Aorta (tissue), 5 donors: ENCODE measurements at regions of chr10 and their contacts with region 1.

Region 1: DNA sequence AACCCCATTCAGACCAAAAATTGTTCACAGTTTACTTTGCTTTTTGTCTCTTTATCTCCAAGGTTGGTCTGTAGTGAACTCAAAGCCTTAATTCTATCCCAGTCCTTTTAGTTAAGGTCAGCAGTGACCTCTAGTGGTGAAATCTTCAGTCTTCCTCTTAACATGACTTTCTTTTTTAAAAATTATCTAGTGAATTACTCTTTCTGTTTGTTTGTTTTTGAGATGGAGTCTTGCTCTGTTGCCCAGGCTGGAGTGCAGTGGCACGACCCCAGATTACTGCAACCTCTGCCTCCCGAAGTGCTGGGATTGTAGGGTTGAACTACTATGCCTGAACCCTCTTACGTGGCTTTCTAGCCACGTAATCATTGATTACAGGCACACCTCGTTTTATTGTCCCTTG is 25.0 kb downstream of the ZNF487 start:
- DNase-seq: no peak
- ATAC-seq: peak; percentile 64
- H3K4me3 ChIP-seq: no peak overlapping the region
- H3K27ac ChIP-seq: no peak overlapping the region
- H3K4me1 ChIP-seq: no peaks in the 10 kb centered on the region
- H3K27me3 ChIP-seq: no peaks in the 10 kb centered on the region

Region 2: DNA sequence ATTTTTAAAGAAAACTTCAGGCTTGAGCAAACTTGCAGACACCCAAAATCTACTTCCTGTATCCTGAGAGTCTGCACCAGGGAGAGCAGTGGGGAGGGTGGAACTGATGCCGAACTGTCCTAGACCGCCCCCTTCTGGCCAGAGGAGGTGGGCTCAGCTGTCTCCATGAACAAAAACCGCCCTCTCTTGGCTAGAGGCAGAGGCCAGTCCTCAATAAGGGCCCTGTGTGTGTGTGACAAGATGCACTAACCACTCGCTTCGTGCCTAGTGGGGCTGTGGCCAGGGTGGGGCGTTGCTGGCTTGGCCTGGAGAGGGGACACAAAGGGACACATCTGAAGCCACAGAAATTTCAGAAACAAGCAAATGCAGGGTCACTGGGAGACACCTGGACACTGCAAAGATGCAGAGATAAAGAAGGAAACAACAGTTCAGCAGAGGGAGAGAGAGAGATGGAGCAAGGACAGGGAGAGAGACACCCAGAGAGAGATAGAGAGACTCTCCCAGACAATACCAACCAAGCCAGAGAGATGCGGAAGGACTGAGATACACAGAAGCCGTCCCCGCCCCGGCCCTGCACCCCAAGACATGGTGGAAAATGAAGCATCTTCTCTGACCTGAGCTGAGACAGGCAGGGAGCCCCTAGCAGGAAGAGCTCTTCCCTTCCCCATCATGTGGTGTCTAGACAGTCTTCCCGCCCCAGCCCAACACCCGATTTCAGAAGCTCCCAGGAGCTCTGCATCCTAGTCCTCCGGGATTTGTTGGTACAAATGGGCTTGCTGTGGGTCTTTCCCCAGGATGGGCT is 113.2 kb before region 1 on chr10:
- intact Hi-C with region 1: loop called in 1 of 2 experiments (anchors 2 kb)
- DNase-seq: peak; percentile 90 to 91
- ATAC-seq: peak; percentile 94
- H3K4me3 ChIP-seq: no peak overlapping the region
- H3K27ac ChIP-seq: no peak overlapping the region
- H3K4me1 ChIP-seq: no peaks in the 10 kb centered on the region
- H3K27me3 ChIP-seq: no peaks in the 10 kb centered on the region

Region 3: GRCh38 chr10:43380610-43381222 is 81.2 kb before region 1 on chr10:
- intact Hi-C with region 1: no loop called
- DNase-seq: peak in 1 of 2 donors; percentile 3
- ATAC-seq: no peak
- H3K4me3 ChIP-seq: no peak overlapping the region
- H3K27ac ChIP-seq: no peak overlapping the region
- H3K4me1 ChIP-seq: no peaks in the 10 kb centered on the region
- H3K27me3 ChIP-seq: peaks cover 0 to 2% of the 10 kb centered on the region in 2 donors

Region 4: DNA sequence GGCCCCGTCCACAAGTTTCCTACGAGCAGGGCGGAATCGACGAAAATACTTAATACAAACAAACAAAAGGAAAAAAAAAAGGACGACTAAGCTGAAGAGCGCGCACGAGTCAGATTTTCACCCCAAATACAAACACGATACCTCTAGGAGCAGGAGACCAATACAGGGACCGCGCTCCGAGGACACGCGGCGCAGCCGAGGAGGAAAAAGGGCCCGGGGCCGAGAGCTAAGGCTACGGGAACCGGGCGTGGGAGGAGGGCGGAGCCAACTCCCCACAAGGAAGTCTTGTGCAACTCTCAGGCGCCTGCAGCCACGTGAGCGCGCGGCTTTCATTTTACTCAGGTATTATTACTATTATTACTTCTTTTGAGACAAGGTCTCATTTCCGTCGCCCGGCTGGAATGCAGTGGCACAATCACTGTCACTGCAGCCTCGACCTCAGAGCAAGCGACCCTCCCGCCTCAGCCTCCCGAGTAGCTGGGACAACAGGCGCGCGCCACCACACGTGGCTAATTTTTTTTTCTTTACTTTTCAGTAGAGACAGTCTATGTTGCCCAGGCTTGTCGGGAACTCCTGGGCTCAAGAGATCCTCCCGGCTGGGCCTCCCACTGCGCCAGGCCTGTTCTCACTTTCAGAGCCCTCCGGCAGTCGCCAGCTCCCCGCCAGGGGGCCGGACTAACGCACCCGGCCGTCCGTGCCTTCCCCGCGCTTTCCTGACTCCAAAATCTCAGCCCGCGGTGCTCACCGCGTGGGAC is 54.2 kb before region 1 on chr10:
- intact Hi-C with region 1: no loop called
- DNase-seq: peak; percentile 95 to 96
- ATAC-seq: peak; percentile 89
- H3K4me3 ChIP-seq: peak overlapping the region; percentile 78 to 94
- H3K27ac ChIP-seq: peak overlapping the region; percentile 97 to 99
- H3K4me1 ChIP-seq: peaks cover 0 to 6% of the 10 kb centered on the region in 2 donors
- H3K27me3 ChIP-seq: no peaks in the 10 kb centered on the region

Region 5: GRCh38 chr10:43420369-43421200 is 41.4 kb before region 1 on chr10:
- intact Hi-C with region 1: no loop called
- DNase-seq: peak; percentile 94 to 95
- ATAC-seq: peak; percentile 99
- H3K4me3 ChIP-seq: peak overlapping the region; percentile 6 to 12
- H3K27ac ChIP-seq: peak overlapping the region; percentile 57 to 90
- H3K4me1 ChIP-seq: no peaks in the 10 kb centered on the region
- H3K27me3 ChIP-seq: no peaks in the 10 kb centered on the region